Dorsolateral prefrontal cortex (tissue), 120 donors: ENCODE measurements at regions of chr5 and their contacts with region 1.

Region 1: GRCh38 chr5:141475625-141476131 is at the start of gene PCDHGC3:
- DNase-seq: peak; percentile 68 to 93 (median 89)
- H3K4me3 ChIP-seq: peak within 1 kb of the TSS; percentile 35 to 85 (median 69)
- H3K27ac ChIP-seq: peak within 1 kb of the TSS in 56 of 59 donors; percentile 4 to 92 (median 78)
- H3K27me3 ChIP-seq: peaks cover 0 to 41% (median 0%) of the 10 kb centered on the region in 45 donors
- CTCF ChIP-seq: peak in 54 of 56 donors; percentile 7 to 77 (median 60)
- total RNA-seq, gene PCDHGC3: 96.7 to 415 (median 161) TPM

Region 2: GRCh38 chr5:141105350-141105749 is 370.3 kb before region 1 on chr5:
- intact Hi-C with region 1: no loop called
- DNase-seq: no peak
- H3K4me3 ChIP-seq: no peak overlapping the region
- H3K27ac ChIP-seq: no peak overlapping the region
- H3K27me3 ChIP-seq: peaks cover 0 to 11% (median 0%) of the 10 kb centered on the region in 45 donors
- CTCF ChIP-seq: no peak

Region 3: DNA sequence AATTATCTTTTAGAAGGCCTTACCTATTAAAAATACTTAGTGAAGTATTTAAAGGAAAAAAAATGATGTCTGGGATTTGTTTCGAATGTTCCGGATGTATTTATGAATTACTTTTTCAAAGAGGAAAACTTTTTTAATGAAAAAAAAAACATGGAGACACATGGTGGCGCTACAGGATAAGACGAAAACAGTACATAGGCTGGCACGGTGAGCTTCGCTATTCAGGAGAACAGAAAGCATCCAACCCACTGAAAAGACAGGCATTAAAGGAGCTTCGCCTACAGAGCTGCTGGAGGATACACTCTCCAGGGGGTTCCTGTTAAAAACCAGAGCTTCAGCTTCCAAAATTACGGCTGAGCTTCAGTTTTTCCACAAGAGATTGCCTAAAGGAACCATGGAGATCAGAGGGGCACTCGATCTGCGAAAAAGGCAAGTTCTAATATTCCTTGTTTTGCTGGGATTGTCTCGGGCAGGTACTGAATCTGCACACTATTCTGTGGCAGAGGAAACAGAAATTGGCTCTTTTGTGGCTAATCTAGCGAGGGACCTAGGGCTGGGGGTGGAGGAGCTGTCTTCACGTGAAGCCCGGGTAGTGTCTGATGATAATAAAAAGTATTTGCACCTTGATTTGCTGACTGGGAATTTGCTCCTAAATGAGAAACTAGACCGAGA is 252.4 kb before region 1 on chr5 and contains the start of gene PCDHB14:
- intact Hi-C with region 1: no loop called
- DNase-seq: no peak
- H3K4me3 ChIP-seq: peak within 1 kb of the TSS in 49 of 59 donors; percentile 3 to 61 (median 34)
- H3K27ac ChIP-seq: no peak within 1 kb of the TSS
- H3K27me3 ChIP-seq: peaks cover 0 to 5% (median 0%) of the 10 kb centered on the region in 45 donors
- CTCF ChIP-seq: peak in 40 of 56 donors; percentile 7 to 59 (median 28)
- total RNA-seq, gene PCDHB14: 8.7 to 23.1 (median 14.6) TPM

Region 4: GRCh38 chr5:141512390-141512910 is 36.8 kb after region 1 on chr5:
- intact Hi-C with region 1: loop called in 1 of 2 experiments (anchors 5 kb)
- DNase-seq: peak in 9 of 10 donors; percentile 71 to 88 (median 79)
- H3K4me3 ChIP-seq: peak overlapping the region; percentile 23 to 73 (median 60)
- H3K27ac ChIP-seq: peak overlapping the region in 58 of 59 donors; percentile 58 to 99 (median 93)
- H3K27me3 ChIP-seq: peaks cover 0 to 23% (median 0%) of the 10 kb centered on the region in 45 donors
- CTCF ChIP-seq: peak; percentile 43 to 93 (median 82)

Region 5: DNA sequence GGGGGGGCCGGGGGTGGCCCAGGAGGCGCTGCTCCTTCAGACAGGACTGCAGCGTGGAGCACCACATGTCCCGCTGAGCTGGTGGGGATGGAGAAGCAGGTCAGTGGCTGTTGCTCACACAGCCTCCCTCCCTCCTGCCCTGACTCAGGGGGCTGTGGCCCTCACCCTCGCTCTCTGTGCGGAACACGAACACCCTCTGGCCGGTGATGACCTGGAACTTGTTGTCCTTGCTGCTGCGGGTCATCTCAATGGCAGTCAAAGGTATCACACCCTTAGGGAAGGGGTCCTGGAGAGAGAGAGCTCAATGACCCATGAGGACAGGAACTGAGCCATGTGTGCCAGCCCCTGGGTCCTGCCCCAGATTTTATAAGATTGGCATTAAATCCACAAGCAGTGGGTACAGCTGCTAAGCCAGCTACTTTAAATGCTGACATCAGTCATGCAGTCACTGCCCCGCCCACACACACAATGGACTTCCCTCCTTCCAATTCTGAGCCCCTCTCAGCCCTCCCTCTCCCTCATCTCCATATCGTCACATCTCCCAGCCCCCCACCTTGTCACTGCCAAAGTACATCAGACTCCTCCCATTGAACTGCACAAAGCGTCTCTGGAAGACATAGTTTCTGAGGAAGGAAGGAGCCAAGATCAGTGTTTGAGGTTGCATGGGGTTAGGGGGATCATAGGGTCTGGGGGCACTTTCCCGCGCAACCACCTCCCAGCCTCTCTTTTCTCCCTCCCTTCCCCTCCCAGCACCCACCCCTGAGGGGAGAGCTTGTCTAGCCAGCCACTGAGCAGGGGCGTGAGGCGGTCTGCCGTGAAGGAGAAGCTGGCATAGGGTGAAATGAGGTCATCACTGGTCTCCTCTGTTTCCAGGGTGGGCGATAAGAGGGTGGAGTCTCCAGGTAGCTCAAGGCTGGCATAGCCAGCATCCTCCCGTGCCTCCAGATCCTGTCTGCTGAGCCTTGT is 197.5 kb after region 1 on chr5:
- intact Hi-C with region 1: no loop called
- DNase-seq: peak in 4 of 10 donors; percentile 42 to 78 (median 60)
- H3K4me3 ChIP-seq: peak overlapping the region in 6 of 59 donors; percentile 3 to 23 (median 8)
- H3K27ac ChIP-seq: peak overlapping the region in 2 of 59 donors; percentile 11 to 20
- H3K27me3 ChIP-seq: no peaks in the 10 kb centered on the region
- CTCF ChIP-seq: no peak